Colonic mucosa (tissue), 4 donors: ENCODE measurements at regions of chr17 and their contacts with region 1.

Region 1: DNA sequence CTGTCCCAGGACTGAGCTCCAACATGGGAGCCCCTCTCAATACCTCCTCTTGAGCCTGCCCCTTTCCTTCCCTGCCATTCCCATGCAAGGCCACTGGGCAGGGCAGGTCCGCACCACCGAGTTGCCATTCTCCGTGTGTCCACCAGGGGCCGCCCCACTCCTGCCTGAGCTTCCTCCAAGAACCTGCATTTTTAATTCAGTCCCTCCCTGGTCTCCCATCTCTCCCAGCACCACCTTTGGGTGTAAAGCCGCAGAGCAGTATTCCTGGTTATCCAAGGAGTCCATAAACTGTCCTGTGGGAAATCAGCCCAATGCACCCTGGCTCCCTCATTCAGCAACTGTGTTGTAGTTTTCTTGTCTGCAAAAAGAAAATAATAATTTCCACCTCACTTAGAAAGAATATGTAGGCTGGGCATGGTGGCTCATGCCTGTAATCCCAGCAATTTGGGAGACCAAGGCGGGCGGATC is 15.9 kb upstream of the ANKRD40CL start:
- DNase-seq: peak; percentile 91
- H3K4me3 ChIP-seq: no peak overlapping the region
- H3K27ac ChIP-seq: no peak overlapping the region
- H3K4me1 ChIP-seq: no peaks in the 10 kb centered on the region
- H3K27me3 ChIP-seq: no peaks in the 10 kb centered on the region
- CTCF ChIP-seq: peak; percentile 98

Region 2: GRCh38 chr17:50661795-50662391 is 121.3 kb before region 1 on chr17:
- intact Hi-C with region 1: no loop called
- DNase-seq: peak; percentile 88
- H3K4me3 ChIP-seq: no peak overlapping the region
- H3K27ac ChIP-seq: peak overlapping the region; percentile 76
- H3K4me1 ChIP-seq: peaks cover 17% of the 10 kb centered on the region
- H3K27me3 ChIP-seq: no peaks in the 10 kb centered on the region
- CTCF ChIP-seq: no peak

Region 3: DNA sequence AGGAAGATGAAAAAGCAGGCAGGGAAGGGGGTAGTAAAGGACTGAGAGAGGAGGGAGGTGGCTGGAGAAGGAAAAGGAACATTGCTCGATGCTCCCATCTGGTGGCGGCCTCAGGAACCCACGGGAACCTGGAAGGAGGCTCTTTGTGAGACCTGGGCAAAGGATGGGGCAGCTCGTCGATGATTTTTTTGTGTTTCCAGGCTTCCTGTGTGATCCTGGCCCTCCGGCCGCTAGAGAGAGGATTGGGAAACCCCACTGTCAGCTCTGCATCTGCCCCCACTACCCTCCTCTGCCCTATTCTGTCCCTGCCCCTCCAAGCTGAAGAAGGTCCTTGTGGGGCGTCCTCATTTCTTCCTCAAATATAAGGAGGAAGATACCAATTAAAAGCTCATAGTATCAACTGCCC is 58.7 kb after region 1 on chr17:
- intact Hi-C with region 1: loop called (anchors 2 kb)
- DNase-seq: peak; percentile 83
- H3K4me3 ChIP-seq: no peak overlapping the region
- H3K27ac ChIP-seq: no peak overlapping the region
- H3K4me1 ChIP-seq: no peaks in the 10 kb centered on the region
- H3K27me3 ChIP-seq: no peaks in the 10 kb centered on the region
- CTCF ChIP-seq: peak; percentile 70

Region 4: DNA sequence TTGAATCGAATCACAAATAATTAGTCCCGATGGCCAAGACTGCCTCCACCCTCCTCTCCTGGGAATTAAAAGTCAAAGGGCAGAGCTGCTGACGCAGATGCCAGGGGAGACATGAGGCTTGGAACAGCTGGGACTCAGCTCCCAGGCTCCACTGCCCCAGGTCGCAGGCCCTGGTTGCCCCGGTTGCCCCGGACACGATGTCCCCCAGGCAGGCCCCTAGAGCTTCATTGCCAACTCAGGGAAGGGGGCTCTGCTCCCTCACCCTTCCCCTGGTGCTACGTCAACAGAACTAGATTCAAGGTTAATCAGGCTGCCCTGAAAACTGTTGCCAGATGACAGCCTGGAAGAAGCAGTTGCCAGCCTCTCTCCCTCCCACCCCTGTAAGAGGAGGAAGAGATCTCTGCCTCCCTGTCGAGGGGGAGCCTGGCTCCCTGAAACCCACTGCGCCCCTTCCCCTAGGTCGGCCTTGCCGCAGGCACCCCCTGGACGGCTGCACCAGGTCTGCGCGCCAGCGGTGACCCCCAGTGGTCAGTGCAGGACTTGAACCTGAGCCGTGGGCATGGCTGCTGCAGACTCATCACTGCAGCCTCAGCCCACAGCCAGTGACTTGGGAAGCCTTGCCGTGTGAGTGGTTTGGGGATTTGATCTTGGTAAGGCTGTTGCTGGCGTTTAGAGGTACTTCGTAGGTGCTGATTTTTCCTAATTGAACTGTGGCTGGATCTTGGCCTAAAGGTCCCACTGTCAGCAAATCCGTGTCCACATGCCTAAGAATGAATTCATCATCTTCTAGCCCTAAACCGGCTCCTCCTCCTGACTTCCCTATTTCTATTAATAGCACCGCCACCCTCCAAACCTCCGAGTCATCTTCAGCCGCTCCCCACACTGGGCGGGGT is 167.0 kb after region 1 on chr17:
- intact Hi-C with region 1: loop called (anchors 10 kb)
- DNase-seq: peak; percentile 86
- H3K4me3 ChIP-seq: no peak overlapping the region
- H3K27ac ChIP-seq: peak overlapping the region; percentile 84
- H3K4me1 ChIP-seq: peaks cover 26% of the 10 kb centered on the region
- H3K27me3 ChIP-seq: no peaks in the 10 kb centered on the region
- CTCF ChIP-seq: peak; percentile 76